ENCODE measurements at regions of chr13 and their contacts with region 1.

Region 1: DNA sequence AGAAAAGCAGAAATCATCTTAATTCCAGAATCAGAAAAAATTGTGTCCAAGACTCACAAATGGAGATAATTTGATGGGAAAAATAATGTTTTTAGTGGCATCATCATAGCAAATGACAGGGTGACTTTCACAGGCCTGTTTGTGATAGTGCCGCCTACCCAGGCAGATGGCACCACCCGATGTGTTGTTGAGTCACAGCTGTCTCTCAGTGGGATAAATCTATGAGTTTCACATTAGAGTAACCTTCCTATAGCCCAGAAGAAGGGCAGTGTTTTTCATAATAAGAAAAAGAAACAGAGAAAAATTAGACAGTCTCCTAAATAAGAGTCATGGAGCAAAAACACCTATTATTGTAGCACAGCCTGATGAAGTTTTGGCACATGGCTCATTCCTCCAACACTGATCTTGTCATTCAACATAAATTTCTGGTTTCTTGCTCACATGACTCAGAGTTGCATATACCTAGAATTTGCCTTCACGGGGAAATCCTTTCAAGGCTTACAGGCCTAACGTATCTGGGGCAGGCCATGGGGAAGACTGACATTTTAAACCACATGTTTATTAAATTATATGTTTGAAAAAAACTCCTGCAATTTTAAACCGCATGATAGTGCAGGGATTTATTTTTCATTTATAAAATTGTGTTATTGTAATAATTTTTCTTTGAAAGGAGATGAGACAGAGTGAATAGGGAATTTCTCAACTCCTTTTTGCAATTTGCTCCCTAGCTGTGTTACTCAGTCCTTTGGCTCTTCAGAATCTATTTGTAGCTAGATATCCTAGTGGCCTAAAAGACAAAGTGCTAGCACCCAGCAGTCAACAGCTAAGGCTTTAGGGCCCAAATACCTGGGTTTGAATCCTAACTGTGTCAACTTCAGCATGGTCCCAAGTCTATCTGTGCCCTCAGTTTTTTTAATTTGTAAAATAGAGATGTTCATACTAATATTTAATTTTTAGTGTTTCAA is 393.7 kb downstream of the NDFIP2 start:
- DNase-seq: no peak
- ATAC-seq: no peak
- H3K4me3 Mint-ChIP-seq: no peak overlapping the region
- H3K27ac Mint-ChIP-seq: no peak overlapping the region
- H3K4me1 Mint-ChIP-seq: no peaks in the 10 kb centered on the region
- H3K27me3 Mint-ChIP-seq: no peaks in the 10 kb centered on the region
- CTCF ChIP-seq: no peak

Region 2: GRCh38 chr13:78742659-78743058 is 1132.0 kb before region 1 on chr13:
- CTCF ChIA-PET with region 1: no interaction called
- POLR2A ChIA-PET with region 1: no interaction called
- intact Hi-C with region 1: loop called (anchors 5 kb)
- DNase-seq: no peak
- ATAC-seq: no peak
- H3K4me3 Mint-ChIP-seq: no peak overlapping the region
- H3K27ac Mint-ChIP-seq: no peak overlapping the region
- H3K4me1 Mint-ChIP-seq: no peaks in the 10 kb centered on the region
- H3K27me3 Mint-ChIP-seq: peaks cover 3% of the 10 kb centered on the region
- CTCF ChIP-seq: no peak